ENCODE measurements at regions of chr14 and their contacts with region 1.

Region 1: GRCh38 chr14:74881431-74882361 is at the start of gene DLST:
- DNase-seq: peak; percentile 82 to 87 (median 83)
- H3K4me3 ChIP-seq: peak within 1 kb of the TSS; percentile 44 to 98
- H3K4me3 Mint-ChIP-seq: peak within 1 kb of the TSS; percentile 96 to 100 (median 99)
- H3K27ac ChIP-seq: peak within 1 kb of the TSS; percentile 87
- H3K27ac Mint-ChIP-seq: peak within 1 kb of the TSS; percentile 93 to 100 (median 100)
- H3K4me1 ChIP-seq: peaks cover 53% of the 10 kb centered on the region
- H3K4me1 Mint-ChIP-seq: peaks cover 48 to 75% (median 62%) of the 10 kb centered on the region in 4 donors
- H3K27me3 ChIP-seq: no peaks in the 10 kb centered on the region
- H3K27me3 Mint-ChIP-seq: no peaks in the 10 kb centered on the region
- total RNA-seq, gene DLST: 101 to 104 TPM

Region 2: DNA sequence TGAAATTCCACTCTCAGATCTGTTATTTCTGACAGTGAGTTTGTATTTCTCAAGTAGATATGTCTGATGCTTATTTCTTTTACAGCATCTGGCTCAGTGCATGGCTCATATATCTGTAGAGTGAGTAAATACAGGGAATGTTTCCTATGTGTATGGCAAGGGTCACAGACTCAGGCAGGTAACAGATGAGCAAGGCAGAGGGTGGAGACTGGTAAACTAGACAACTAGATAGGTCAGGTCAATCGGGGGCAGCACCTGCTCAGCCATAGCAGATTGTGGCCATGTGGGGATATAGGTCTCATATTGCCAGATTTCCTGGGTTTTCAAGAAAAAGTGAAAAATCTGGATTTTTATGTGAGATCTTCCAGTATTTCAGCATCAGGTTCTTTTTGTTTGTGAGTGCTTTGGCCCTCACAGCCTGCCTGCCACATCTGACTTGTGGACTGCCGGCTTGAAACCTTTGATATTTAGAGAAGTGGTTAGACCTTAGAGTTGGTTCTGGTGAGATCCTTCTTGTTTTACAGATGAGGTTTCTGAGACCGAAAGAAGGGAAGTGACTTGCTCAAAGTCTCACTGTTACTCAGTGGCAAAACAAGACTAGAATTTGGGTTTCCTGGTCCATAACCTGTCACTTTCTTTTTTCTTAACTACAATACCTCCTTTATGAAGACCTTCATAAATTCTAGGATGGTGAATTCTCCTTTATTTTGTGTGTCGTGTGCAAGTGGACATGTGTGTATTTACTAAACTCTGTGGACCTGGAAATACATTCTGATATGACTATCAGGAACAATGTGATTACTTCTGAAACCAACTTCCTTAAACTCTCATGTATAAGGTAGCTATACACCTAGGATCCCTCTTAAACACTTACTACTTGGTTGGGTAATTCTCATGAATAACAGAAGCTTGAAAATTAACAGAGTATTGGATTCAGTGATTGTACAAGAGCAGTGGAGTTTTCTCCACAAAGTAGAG is 40.2 kb before region 1 on chr14:
- CTCF ChIA-PET with region 1: no interaction called
- POLR2A ChIA-PET with region 1: interaction called, 16 read pairs
- intact Hi-C with region 1: no loop called
- DNase-seq: peak in 4 of 5 donors; percentile 16 to 31 (median 28)
- H3K4me3 ChIP-seq: peak overlapping the region in 1 of 2 donors; percentile 22
- H3K4me3 Mint-ChIP-seq: peak overlapping the region; percentile 35 to 73 (median 59)
- H3K27ac ChIP-seq: peak overlapping the region; percentile 14
- H3K27ac Mint-ChIP-seq: peak overlapping the region; percentile 85 to 96 (median 89)
- H3K4me1 ChIP-seq: peaks cover 59% of the 10 kb centered on the region
- H3K4me1 Mint-ChIP-seq: peaks cover 43 to 65% (median 53%) of the 10 kb centered on the region in 4 donors
- H3K27me3 ChIP-seq: no peaks in the 10 kb centered on the region
- H3K27me3 Mint-ChIP-seq: no peaks in the 10 kb centered on the region

Region 3: GRCh38 chr14:74867673-74868072 is 14.0 kb before region 1 on chr14:
- CTCF ChIA-PET with region 1: interaction called, 253 read pairs
- POLR2A ChIA-PET with region 1: interaction called, 94 read pairs
- intact Hi-C with region 1: loop called (anchors 2 kb)
- DNase-seq: peak; percentile 41 to 66 (median 47)
- H3K4me3 ChIP-seq: no peak overlapping the region
- H3K4me3 Mint-ChIP-seq: peak overlapping the region in 7 of 8 donors; percentile 21 to 77 (median 56)
- H3K27ac ChIP-seq: no peak overlapping the region
- H3K27ac Mint-ChIP-seq: peak overlapping the region; percentile 28 to 88 (median 59)
- H3K4me1 ChIP-seq: peaks cover 16% of the 10 kb centered on the region
- H3K4me1 Mint-ChIP-seq: peaks cover 18 to 25% (median 21%) of the 10 kb centered on the region in 4 donors
- H3K27me3 ChIP-seq: no peaks in the 10 kb centered on the region
- H3K27me3 Mint-ChIP-seq: no peaks in the 10 kb centered on the region

Region 4: GRCh38 chr14:74893614-74894091 is 12.0 kb after region 1 on chr14:
- CTCF ChIA-PET with region 1: interaction called, 13 read pairs
- POLR2A ChIA-PET with region 1: interaction called, 20 read pairs
- intact Hi-C with region 1: no loop called
- DNase-seq: no peak
- H3K4me3 ChIP-seq: no peak overlapping the region
- H3K4me3 Mint-ChIP-seq: no peak overlapping the region
- H3K27ac ChIP-seq: no peak overlapping the region
- H3K27ac Mint-ChIP-seq: peak overlapping the region in 4 of 7 donors; percentile 4 to 51 (median 36)
- H3K4me1 ChIP-seq: peaks cover 2% of the 10 kb centered on the region
- H3K4me1 Mint-ChIP-seq: peaks cover 4 to 10% (median 9%) of the 10 kb centered on the region in 4 donors
- H3K27me3 ChIP-seq: no peaks in the 10 kb centered on the region
- H3K27me3 Mint-ChIP-seq: no peaks in the 10 kb centered on the region

Region 5: DNA sequence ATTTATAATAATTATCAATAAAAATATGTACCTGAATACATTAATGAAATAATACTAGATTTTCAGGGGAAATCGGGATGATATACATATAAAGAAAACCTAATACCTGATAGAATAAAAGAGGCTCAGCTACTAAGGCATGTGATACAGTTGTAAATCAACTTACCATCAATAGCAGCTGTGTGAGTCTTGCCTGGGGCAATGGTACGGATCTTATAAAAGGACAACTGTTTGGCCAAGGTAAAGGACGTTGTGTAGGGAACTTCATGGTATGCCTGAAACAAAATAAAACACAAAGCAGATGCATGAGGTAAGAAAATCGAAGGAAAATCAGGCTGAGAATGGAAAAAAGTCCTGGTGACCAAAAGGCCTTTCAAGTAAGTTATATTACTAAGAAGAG is 219.8 kb after region 1 on chr14:
- CTCF ChIA-PET with region 1: no interaction called
- POLR2A ChIA-PET with region 1: no interaction called
- intact Hi-C with region 1: no loop called
- DNase-seq: no peak
- H3K4me3 ChIP-seq: no peak overlapping the region
- H3K4me3 Mint-ChIP-seq: no peak overlapping the region
- H3K27ac ChIP-seq: no peak overlapping the region
- H3K27ac Mint-ChIP-seq: peak overlapping the region in 2 of 7 donors; percentile 0 to 53
- H3K4me1 ChIP-seq: no peaks in the 10 kb centered on the region
- H3K4me1 Mint-ChIP-seq: peaks cover 0 to 4% (median 3%) of the 10 kb centered on the region in 4 donors
- H3K27me3 ChIP-seq: no peaks in the 10 kb centered on the region
- H3K27me3 Mint-ChIP-seq: no peaks in the 10 kb centered on the region